Activated B cell treated with CpG ODN at 0.5 μM for 24 hours (primary cell): ENCODE measurements at regions of chr2 and their contacts with region 1.

Region 1: DNA sequence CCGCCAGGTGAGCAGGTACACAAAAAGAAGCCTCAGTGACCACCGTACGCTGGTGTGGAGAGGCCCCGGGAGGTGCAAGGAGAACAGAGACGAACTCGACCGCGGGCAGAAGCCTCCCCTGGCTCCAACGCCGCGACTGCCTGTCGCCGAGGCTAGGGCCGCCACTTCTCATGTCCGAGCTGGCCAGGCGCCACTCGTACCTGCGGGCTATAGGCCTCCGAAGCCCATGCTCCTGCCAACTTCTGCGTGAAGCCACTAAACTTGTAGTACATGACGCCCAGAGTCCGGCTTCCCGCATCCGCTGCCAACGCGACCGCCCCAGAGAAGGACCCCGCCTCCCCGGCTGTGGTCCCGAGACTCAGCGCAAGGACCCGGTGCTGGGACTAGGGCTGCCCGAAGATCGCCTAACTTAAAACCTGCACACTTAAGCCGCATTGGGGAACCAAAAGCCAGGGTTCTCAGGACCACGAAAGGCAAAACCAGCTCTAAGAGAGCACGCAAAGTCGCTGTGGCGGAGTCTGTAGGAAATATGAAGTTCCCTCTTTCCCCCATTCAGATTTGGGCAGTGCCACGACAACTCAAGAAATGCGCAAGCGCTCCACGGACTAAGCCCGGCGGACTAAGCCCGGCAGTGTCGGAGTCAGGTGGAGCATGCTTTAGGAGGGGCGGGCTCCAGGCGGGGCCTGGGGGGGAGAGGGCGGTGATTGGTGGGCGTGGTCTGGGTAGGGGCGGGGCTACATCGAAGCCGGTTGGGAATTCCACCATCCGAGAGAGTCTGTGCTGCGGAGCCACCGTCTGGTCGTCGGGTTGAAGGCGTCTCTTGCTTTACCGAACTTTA is at the start of gene COX7A2L:
- DNase-seq: peak; percentile 90
- ATAC-seq: peak; percentile 95
- H3K4me3 Mint-ChIP-seq: peak within 1 kb of the TSS; percentile 94
- H3K27ac Mint-ChIP-seq: peak within 1 kb of the TSS; percentile 99
- H3K4me1 Mint-ChIP-seq: peaks cover 44% of the 10 kb centered on the region
- H3K27me3 Mint-ChIP-seq: peaks cover 4% of the 10 kb centered on the region
- CTCF ChIP-seq: no peak
- total RNA-seq, gene COX7A2L: 84.2 and 86.4 TPM in 2 replicates

Region 2: DNA sequence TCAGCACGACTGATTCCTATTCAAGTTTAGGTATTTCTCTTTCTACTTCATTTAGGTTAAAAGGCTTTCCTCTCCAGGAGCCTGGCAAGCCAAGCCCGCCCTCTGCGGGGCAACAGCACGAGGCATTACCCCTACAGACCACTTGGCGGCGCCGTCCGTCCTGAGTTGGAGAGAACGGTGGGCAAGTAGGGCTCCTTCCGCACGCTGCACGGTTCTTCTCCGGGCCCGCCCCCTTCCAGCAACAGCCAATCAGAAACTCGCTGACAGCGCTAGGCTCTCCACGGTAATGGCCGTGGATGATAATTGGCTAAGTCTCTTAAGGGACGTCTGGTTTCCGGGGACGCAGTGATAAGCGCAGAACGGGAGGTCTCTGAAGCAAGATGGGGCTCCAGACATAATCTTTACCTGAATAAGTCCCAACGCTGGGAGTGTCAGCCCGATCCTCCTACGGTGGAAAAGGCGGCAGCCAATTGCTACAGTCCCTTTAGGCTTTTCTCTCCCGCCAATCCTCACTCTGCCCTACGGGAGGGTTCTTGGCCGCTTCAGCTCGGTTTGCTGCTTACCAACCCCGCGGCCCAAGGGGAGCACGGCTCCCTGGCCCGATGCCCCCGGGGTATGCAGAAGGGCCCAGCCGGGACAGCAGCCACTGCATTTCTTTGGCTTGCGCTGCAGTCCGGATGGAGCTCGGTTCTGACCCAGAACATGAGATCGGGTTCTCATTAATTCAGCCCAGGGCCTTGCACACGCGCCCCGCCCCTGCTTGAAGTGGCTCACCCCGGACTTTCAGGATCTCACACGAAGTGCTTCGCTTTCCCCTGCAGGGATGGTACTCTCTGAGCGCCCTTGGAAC is 520.2 kb before region 1 on chr2:
- CTCF ChIA-PET with region 1: no interaction called
- POLR2A ChIA-PET with region 1: no interaction called
- intact Hi-C with region 1: loop called (anchors 1 kb)
- DNase-seq: peak; percentile 88
- ATAC-seq: peak; percentile 98
- H3K4me3 Mint-ChIP-seq: peak overlapping the region; percentile 89
- H3K27ac Mint-ChIP-seq: peak overlapping the region; percentile 82
- H3K4me1 Mint-ChIP-seq: peaks cover 13% of the 10 kb centered on the region
- H3K27me3 Mint-ChIP-seq: peaks cover 24% of the 10 kb centered on the region
- CTCF ChIP-seq: peak; percentile 78

Region 3: DNA sequence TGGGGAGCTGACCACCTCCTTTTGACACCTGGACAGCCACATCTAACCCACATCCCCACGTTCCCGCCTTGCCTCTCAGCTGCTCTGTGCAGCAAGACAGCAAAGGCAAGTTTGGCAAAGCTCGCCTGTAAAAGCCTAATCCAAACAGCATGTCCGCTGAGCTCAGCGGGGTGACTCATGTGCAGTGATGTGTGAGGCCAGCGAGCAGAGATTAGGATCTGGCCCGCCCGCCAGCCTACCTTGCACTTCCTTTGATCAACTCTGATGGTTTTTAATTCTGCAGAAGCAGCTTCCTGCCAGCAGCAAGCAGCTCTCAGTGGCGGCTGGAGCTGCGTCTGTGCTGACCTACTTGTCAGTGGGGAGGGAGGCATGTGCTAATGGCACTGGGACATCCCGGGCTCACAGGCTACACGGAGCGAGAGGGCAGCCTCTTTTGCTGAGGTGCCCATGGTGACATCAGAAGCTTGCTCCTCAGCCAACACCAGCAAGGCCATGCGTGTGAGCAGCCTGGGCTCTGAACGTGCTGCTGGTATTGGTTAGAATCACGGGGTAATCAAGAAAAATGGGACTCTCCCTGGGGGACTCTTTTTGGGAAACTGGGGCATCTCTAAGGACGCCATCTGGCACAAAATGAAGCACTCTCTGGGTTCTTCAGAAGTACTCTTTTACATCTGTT is 228.0 kb before region 1 on chr2:
- CTCF ChIA-PET with region 1: no interaction called
- POLR2A ChIA-PET with region 1: no interaction called
- intact Hi-C with region 1: no loop called
- DNase-seq: peak; percentile 57
- ATAC-seq: peak; percentile 93
- H3K4me3 Mint-ChIP-seq: peak overlapping the region; percentile 80
- H3K27ac Mint-ChIP-seq: peak overlapping the region; percentile 89
- H3K4me1 Mint-ChIP-seq: peaks cover 80% of the 10 kb centered on the region
- H3K27me3 Mint-ChIP-seq: no peaks in the 10 kb centered on the region
- CTCF ChIP-seq: no peak

Region 4: DNA sequence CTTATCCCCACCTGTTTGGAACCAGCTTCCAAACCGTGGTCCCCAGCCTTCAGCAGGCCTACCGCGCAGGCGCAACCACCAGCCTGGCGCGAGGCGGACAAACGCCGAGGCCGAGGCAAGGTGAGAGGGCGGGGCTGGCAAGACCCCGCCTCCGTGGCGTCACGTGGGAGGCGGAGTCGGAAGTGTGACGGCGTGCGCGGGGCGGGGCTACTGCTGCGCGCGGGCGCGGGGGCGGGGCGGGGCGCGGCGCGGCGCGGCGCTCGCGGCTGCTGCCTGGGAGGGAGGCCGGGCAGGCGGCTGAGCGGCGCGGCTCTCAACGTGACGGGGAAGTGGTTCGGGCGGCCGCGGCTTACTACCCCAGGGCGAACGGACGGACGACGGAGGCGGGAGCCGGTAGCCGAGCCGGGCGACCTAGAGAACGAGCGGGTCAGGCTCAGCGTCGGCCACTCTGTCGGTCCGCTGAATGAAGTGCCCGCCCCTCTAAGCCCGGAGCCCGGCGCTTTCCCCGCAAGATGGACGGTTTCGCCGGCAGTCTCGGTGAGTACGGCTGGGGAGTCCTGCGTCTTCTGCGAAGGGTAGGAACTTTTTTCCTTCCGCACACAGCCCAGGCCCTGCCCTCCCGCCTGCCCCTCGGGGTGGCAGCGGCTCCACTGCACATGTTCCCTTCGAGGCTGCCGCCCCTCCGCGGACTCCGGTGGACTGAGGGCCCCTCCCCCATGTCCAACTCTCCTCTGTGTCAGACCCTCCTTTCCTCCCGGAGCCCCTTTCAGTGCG is 191.8 kb before region 1 on chr2 and contains the start of gene EML4:
- CTCF ChIA-PET with region 1: no interaction called
- POLR2A ChIA-PET with region 1: no interaction called
- intact Hi-C with region 1: loop called (anchors 1 kb)
- DNase-seq: peak; percentile 97
- ATAC-seq: peak; percentile 88
- H3K4me3 Mint-ChIP-seq: no peak within 1 kb of the TSS
- H3K27ac Mint-ChIP-seq: no peak within 1 kb of the TSS
- H3K4me1 Mint-ChIP-seq: peaks cover 26% of the 10 kb centered on the region
- H3K27me3 Mint-ChIP-seq: no peaks in the 10 kb centered on the region
- CTCF ChIP-seq: no peak
- total RNA-seq, gene EML4: 83.2 and 95.8 TPM in 2 replicates

Region 5: GRCh38 chr2:42296226-42296625 is 64.9 kb before region 1 on chr2:
- CTCF ChIA-PET with region 1: no interaction called
- POLR2A ChIA-PET with region 1: no interaction called
- intact Hi-C with region 1: loop called (anchors 2 kb)
- DNase-seq: no peak
- ATAC-seq: peak; percentile 89
- H3K4me3 Mint-ChIP-seq: peak overlapping the region; percentile 36
- H3K27ac Mint-ChIP-seq: peak overlapping the region; percentile 64
- H3K4me1 Mint-ChIP-seq: peaks cover 29% of the 10 kb centered on the region
- H3K27me3 Mint-ChIP-seq: no peaks in the 10 kb centered on the region
- CTCF ChIP-seq: no peak

Region 6: GRCh38 chr2:42342795-42343252 is 18.3 kb before region 1 on chr2:
- CTCF ChIA-PET with region 1: no interaction called
- POLR2A ChIA-PET with region 1: no interaction called
- intact Hi-C with region 1: no loop called
- DNase-seq: no peak
- ATAC-seq: no peak
- H3K4me3 Mint-ChIP-seq: no peak overlapping the region
- H3K27ac Mint-ChIP-seq: no peak overlapping the region
- H3K4me1 Mint-ChIP-seq: peaks cover 7% of the 10 kb centered on the region
- H3K27me3 Mint-ChIP-seq: no peaks in the 10 kb centered on the region
- CTCF ChIP-seq: no peak

Region 7: DNA sequence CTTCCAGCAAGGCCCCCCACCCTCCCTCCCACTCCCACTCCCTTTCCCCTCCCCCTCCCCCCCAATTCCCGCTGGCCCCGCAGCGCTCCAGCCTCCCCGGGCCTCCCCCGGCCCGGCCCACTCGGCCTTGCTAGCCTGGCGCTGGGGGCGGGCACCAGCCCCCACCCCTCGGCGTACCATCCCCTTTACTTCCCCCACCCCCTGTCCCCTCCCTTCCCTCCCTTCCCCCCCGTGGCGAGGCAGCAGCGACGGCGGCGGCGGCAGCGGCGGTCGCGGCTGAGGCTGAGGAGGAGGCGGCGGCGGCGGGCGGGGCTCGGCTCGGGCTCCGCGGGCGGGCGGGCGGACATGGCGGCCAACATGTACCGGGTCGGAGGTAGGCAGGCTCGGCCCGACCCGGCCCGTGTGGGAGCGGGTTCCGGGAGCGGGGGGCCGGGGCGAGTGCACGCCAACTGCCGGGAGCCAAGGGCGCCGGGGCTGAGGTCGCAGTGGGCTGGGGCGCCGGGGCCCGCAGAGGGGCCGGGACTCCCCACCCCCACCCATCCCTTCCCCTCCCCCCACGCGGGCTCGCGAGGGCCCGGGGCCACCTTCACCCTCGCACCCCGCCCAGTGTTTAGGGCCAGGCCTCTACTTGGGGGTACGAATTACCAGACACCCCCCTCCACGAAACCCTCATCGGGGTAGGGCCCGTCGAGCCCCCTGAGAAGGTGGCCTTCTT is 207.4 kb after region 1 on chr2 and contains the start of gene MTA3:
- CTCF ChIA-PET with region 1: no interaction called
- POLR2A ChIA-PET with region 1: no interaction called
- intact Hi-C with region 1: loop called (anchors 2 kb)
- DNase-seq: peak; percentile 62
- ATAC-seq: peak; percentile 69
- H3K4me3 Mint-ChIP-seq: peak within 1 kb of the TSS; percentile 87
- H3K27ac Mint-ChIP-seq: peak within 1 kb of the TSS; percentile 70
- H3K4me1 Mint-ChIP-seq: peaks cover 30% of the 10 kb centered on the region
- H3K27me3 Mint-ChIP-seq: no peaks in the 10 kb centered on the region
- CTCF ChIP-seq: no peak
- total RNA-seq, gene MTA3: 26.2 and 26.8 TPM in 2 replicates

Region 8: GRCh38 chr2:42722320-42723190 is 361.4 kb after region 1 on chr2:
- CTCF ChIA-PET with region 1: no interaction called
- POLR2A ChIA-PET with region 1: no interaction called
- intact Hi-C with region 1: loop called (anchors 1 kb)
- DNase-seq: no peak
- ATAC-seq: peak; percentile 91
- H3K4me3 Mint-ChIP-seq: peak overlapping the region; percentile 17
- H3K27ac Mint-ChIP-seq: peak overlapping the region; percentile 21
- H3K4me1 Mint-ChIP-seq: peaks cover 11% of the 10 kb centered on the region
- H3K27me3 Mint-ChIP-seq: no peaks in the 10 kb centered on the region
- CTCF ChIP-seq: no peak

Region 9: GRCh38 chr2:42906557-42907411 is 545.7 kb after region 1 on chr2:
- CTCF ChIA-PET with region 1: no interaction called
- POLR2A ChIA-PET with region 1: no interaction called
- intact Hi-C with region 1: no loop called
- DNase-seq: no peak
- ATAC-seq: no peak
- H3K4me3 Mint-ChIP-seq: no peak overlapping the region
- H3K27ac Mint-ChIP-seq: no peak overlapping the region
- H3K4me1 Mint-ChIP-seq: peaks cover 2% of the 10 kb centered on the region
- H3K27me3 Mint-ChIP-seq: peaks cover 16% of the 10 kb centered on the region
- CTCF ChIP-seq: no peak

Region 10: DNA sequence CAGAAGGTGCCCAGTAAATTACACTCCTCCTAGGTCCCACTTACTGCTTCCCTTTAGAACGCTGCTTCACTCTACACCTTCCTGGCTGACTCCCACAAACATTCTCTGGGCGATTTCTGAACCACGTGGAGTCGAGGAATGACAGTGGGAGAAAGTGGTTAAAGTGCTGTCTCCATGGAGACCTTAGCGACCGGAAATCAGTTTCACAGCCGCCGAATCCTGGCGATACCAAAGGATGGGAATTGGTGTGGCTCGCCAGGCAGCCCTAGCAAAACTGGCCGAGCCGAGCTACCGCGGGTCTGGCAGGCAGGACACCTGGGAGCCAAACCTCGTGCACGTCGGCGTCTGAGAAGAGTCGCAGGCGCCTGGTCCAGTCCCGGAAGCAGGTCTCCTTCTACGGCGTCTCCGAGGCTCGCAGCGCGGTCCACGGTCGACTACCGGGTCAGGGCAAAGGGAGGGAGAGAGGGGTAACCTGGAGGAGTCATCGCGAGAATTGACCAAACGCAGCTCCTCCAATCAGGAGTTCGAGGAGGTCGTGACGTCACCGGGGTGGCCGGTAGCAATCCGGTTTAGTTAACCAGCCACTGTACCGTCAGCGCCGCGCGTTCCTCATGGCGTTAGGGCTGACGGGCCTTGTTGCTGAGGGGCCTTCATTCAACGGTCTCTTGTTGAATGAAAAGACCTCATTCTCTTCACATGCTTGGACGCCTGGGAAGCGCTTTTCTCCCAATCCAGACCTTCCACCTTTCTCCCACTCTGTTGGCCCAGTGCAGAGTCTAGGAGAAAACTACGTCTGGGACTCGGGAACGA is 1234.7 kb after region 1 on chr2 and contains the start of gene THADA:
- CTCF ChIA-PET with region 1: no interaction called
- POLR2A ChIA-PET with region 1: no interaction called
- intact Hi-C with region 1: loop called (anchors 2 kb)
- DNase-seq: peak; percentile 86
- ATAC-seq: peak; percentile 98
- H3K4me3 Mint-ChIP-seq: peak within 1 kb of the TSS; percentile 97
- H3K27ac Mint-ChIP-seq: peak within 1 kb of the TSS; percentile 95
- H3K4me1 Mint-ChIP-seq: peaks cover 27% of the 10 kb centered on the region
- H3K27me3 Mint-ChIP-seq: no peaks in the 10 kb centered on the region
- CTCF ChIP-seq: no peak
- total RNA-seq, gene THADA: 43.2 and 51.4 TPM in 2 replicates